ENCODE measurements at regions of chr6 and their contacts with region 1.

Region 1: GRCh38 chr6:42782622-42783176 is 847 bp downstream of the BICRAL start:
- DNase-seq: peak; percentile 69 to 90 (median 77)
- ATAC-seq: peak; percentile 60
- H3K4me3 ChIP-seq: peak overlapping the region; percentile 81
- H3K4me3 Mint-ChIP-seq: peak overlapping the region; percentile 100
- H3K27ac ChIP-seq: peak overlapping the region; percentile 100
- H3K27ac Mint-ChIP-seq: no peak overlapping the region
- H3K4me1 ChIP-seq: peaks cover 51% of the 10 kb centered on the region
- H3K4me1 Mint-ChIP-seq: peaks cover 30% of the 10 kb centered on the region
- H3K27me3 ChIP-seq: no peaks in the 10 kb centered on the region
- H3K27me3 Mint-ChIP-seq: no peaks in the 10 kb centered on the region
- CTCF ChIP-seq: no peak

Region 2: GRCh38 chr6:42661540-42662153 is 121.1 kb before region 1 on chr6:
- CTCF ChIA-PET with region 1: interaction called, 4 read pairs
- POLR2A ChIA-PET with region 1: interaction called, 21 read pairs
- intact Hi-C with region 1: no loop called
- DNase-seq: peak; percentile 75 to 91 (median 85)
- ATAC-seq: peak; percentile 100
- H3K4me3 ChIP-seq: no peak overlapping the region
- H3K4me3 Mint-ChIP-seq: no peak overlapping the region
- H3K27ac ChIP-seq: no peak overlapping the region
- H3K27ac Mint-ChIP-seq: no peak overlapping the region
- H3K4me1 ChIP-seq: no peaks in the 10 kb centered on the region
- H3K4me1 Mint-ChIP-seq: no peaks in the 10 kb centered on the region
- H3K27me3 ChIP-seq: no peaks in the 10 kb centered on the region
- H3K27me3 Mint-ChIP-seq: no peaks in the 10 kb centered on the region
- CTCF ChIP-seq: peak; percentile 90

Region 3: GRCh38 chr6:42726485-42727086 is 56.1 kb before region 1 on chr6:
- CTCF ChIA-PET with region 1: interaction called, 7 read pairs
- POLR2A ChIA-PET with region 1: interaction called, 90 read pairs
- intact Hi-C with region 1: loop called in 1 of 2 experiments (anchors 2 kb)
- DNase-seq: peak; percentile 54 to 95 (median 66)
- ATAC-seq: peak; percentile 97
- H3K4me3 ChIP-seq: peak overlapping the region; percentile 54
- H3K4me3 Mint-ChIP-seq: peak overlapping the region; percentile 87
- H3K27ac ChIP-seq: peak overlapping the region; percentile 64 to 65
- H3K27ac Mint-ChIP-seq: peak overlapping the region; percentile 90
- H3K4me1 ChIP-seq: peaks cover 14% of the 10 kb centered on the region
- H3K4me1 Mint-ChIP-seq: peaks cover 19% of the 10 kb centered on the region
- H3K27me3 ChIP-seq: no peaks in the 10 kb centered on the region
- H3K27me3 Mint-ChIP-seq: no peaks in the 10 kb centered on the region
- CTCF ChIP-seq: peak; percentile 90

Region 4: GRCh38 chr6:42766141-42766670 is 16.5 kb before region 1 on chr6:
- CTCF ChIA-PET with region 1: interaction called, 11 read pairs
- POLR2A ChIA-PET with region 1: interaction called, 724 read pairs
- intact Hi-C with region 1: loop called (anchors 1 kb)
- DNase-seq: peak in 1 of 14 experiments; percentile 32
- ATAC-seq: no peak
- H3K4me3 ChIP-seq: no peak overlapping the region
- H3K4me3 Mint-ChIP-seq: no peak overlapping the region
- H3K27ac ChIP-seq: no peak overlapping the region
- H3K27ac Mint-ChIP-seq: peak overlapping the region; percentile 58
- H3K4me1 ChIP-seq: peaks cover 32% of the 10 kb centered on the region
- H3K4me1 Mint-ChIP-seq: peaks cover 58% of the 10 kb centered on the region
- H3K27me3 ChIP-seq: no peaks in the 10 kb centered on the region
- H3K27me3 Mint-ChIP-seq: no peaks in the 10 kb centered on the region
- CTCF ChIP-seq: no peak

Region 5: DNA sequence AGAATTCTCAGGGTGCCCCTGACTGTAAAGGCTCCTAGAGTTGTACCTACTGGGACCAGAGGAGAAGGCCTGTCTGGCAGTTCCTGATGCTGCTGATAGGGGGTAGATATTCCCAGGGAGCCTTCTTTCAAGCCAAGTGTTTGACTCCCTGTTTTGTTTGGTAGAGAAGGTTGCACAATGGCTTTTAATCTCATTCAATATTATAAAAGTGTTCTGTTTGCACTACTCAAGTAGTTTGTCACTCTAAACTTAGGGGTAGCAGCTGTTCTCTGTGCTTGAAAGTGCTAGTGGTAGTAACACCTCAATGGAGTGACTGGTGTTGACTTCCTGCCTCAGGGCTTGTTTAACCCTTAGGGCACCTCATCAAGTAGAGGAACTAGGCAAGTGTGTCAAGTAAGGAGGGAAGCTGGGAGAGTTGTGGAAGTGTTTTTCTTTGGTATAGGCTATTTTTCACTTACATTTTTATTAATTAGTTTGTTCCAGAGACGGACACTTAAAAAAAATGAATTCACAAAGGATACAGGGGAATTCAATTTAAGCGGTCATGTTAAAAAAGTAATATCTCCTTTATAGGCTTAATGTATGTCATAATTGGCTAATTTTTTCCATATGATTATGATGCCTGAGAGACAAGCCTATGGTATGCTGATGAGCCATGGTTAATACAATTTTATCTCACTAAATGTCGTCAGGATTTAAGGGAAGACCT is 37.3 kb after region 1 on chr6:
- CTCF ChIA-PET with region 1: no interaction called
- POLR2A ChIA-PET with region 1: interaction called, 22 read pairs
- intact Hi-C with region 1: loop called in 1 of 2 experiments (anchors 5 kb)
- DNase-seq: peak in 5 of 14 experiments; percentile 1 to 51 (median 35)
- ATAC-seq: peak; percentile 78
- H3K4me3 ChIP-seq: no peak overlapping the region
- H3K4me3 Mint-ChIP-seq: no peak overlapping the region
- H3K27ac ChIP-seq: no peak overlapping the region
- H3K27ac Mint-ChIP-seq: peak overlapping the region; percentile 86
- H3K4me1 ChIP-seq: peaks cover 7% of the 10 kb centered on the region
- H3K4me1 Mint-ChIP-seq: peaks cover 39% of the 10 kb centered on the region
- H3K27me3 ChIP-seq: no peaks in the 10 kb centered on the region
- H3K27me3 Mint-ChIP-seq: no peaks in the 10 kb centered on the region
- CTCF ChIP-seq: no peak

Region 6: GRCh38 chr6:42890311-42891198 is 107.9 kb after region 1 on chr6:
- CTCF ChIA-PET with region 1: no interaction called
- POLR2A ChIA-PET with region 1: interaction called, 26 read pairs
- intact Hi-C with region 1: no loop called
- DNase-seq: peak; percentile 77 to 93 (median 87)
- ATAC-seq: peak; percentile 93
- H3K4me3 ChIP-seq: peak overlapping the region; percentile 94
- H3K4me3 Mint-ChIP-seq: peak overlapping the region; percentile 91
- H3K27ac ChIP-seq: peak overlapping the region; percentile 86 to 89
- H3K27ac Mint-ChIP-seq: peak overlapping the region; percentile 94
- H3K4me1 ChIP-seq: peaks cover 17% of the 10 kb centered on the region
- H3K4me1 Mint-ChIP-seq: peaks cover 16% of the 10 kb centered on the region
- H3K27me3 ChIP-seq: no peaks in the 10 kb centered on the region
- H3K27me3 Mint-ChIP-seq: no peaks in the 10 kb centered on the region
- CTCF ChIP-seq: no peak

Region 7: GRCh38 chr6:43174263-43175112 is 391.8 kb after region 1 on chr6:
- CTCF ChIA-PET with region 1: no interaction called
- POLR2A ChIA-PET with region 1: no interaction called
- intact Hi-C with region 1: loop called in 1 of 2 experiments (anchors 10 kb)
- DNase-seq: peak; percentile 73 to 99 (median 91)
- ATAC-seq: peak; percentile 51
- H3K4me3 ChIP-seq: peak overlapping the region; percentile 83
- H3K4me3 Mint-ChIP-seq: peak overlapping the region; percentile 89
- H3K27ac ChIP-seq: peak overlapping the region; percentile 78 to 83
- H3K27ac Mint-ChIP-seq: peak overlapping the region; percentile 88
- H3K4me1 ChIP-seq: peaks cover 52% of the 10 kb centered on the region
- H3K4me1 Mint-ChIP-seq: peaks cover 42% of the 10 kb centered on the region
- H3K27me3 ChIP-seq: no peaks in the 10 kb centered on the region
- H3K27me3 Mint-ChIP-seq: no peaks in the 10 kb centered on the region
- CTCF ChIP-seq: no peak

Measured in CD4-positive, alpha-beta T cell (primary cell).